ENCODE measurements at regions of chr3 and their contacts with region 1.

Region 1: GRCh38 chr3:151305101-151305750 is 11.4 kb downstream of the GPR87 start:
- DNase-seq: no peak
- ATAC-seq: peak; percentile 48
- H3K4me3 Mint-ChIP-seq: no peak overlapping the region
- H3K27ac Mint-ChIP-seq: peak overlapping the region; percentile 10
- H3K4me1 Mint-ChIP-seq: peaks cover 73% of the 10 kb centered on the region
- H3K27me3 Mint-ChIP-seq: no peaks in the 10 kb centered on the region

Region 2: GRCh38 chr3:151290673-151291072 is 14.6 kb before region 1 on chr3:
- CTCF ChIA-PET with region 1: interaction called, 14 read pairs
- DNase-seq: no peak
- ATAC-seq: no peak
- H3K4me3 Mint-ChIP-seq: no peak overlapping the region
- H3K27ac Mint-ChIP-seq: no peak overlapping the region
- H3K4me1 Mint-ChIP-seq: peaks cover 13% of the 10 kb centered on the region
- H3K27me3 Mint-ChIP-seq: peaks cover 2% of the 10 kb centered on the region

Region 3: DNA sequence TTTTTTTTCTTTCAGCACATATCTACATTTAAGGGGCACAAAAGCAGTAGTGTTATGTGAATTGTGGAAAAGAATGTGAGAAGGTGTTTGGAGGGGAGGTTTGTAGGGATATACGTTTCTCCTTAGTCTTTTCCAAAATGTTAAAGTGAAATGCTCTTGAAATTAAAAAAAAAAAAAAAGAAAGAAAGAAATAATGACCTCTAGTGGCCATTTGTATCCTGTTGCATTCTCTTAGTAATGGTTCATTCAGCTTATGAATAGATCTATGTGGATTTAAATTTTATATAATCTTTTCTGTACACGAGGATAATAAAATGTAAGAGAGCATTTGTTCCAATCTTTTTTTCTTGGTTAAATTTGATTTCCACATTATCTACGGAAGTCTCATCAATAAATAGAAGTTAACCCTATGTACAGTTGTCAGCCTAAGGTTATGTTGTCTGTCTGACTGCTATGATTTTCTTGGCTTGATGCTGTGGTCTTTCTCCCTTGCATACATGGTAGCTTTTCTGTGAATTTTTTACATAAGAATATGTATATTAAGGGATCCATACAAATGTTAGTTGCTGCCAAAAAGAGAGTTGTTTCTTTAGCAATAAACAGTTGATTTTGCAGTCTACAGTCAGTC is 22.5 kb after region 1 on chr3:
- CTCF ChIA-PET with region 1: interaction called, 12 read pairs
- DNase-seq: no peak
- ATAC-seq: no peak
- H3K4me3 Mint-ChIP-seq: no peak overlapping the region
- H3K27ac Mint-ChIP-seq: no peak overlapping the region
- H3K4me1 Mint-ChIP-seq: peaks cover 12% of the 10 kb centered on the region
- H3K27me3 Mint-ChIP-seq: peaks cover 2% of the 10 kb centered on the region

Region 4: DNA sequence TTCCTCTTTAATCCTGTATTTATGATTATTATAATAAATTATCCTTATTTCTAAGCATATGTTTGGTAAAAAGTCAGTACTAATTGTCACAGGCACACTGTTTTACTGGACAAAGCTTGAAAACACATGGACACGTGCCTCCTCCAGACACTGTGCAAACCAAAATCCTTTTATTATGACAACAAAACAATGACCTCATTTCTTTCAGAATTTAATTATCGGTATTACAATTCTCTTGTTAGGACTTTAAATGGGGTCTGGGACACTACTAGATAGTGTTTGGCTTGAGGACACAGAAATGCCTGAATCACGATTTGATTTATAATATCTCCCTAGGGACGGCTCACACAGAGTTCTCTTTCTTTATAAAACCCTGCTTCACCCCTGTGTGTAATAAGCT is 263.0 kb after region 1 on chr3:
- CTCF ChIA-PET with region 1: no interaction called
- DNase-seq: no peak
- ATAC-seq: no peak
- H3K4me3 Mint-ChIP-seq: no peak overlapping the region
- H3K27ac Mint-ChIP-seq: no peak overlapping the region
- H3K4me1 Mint-ChIP-seq: no peaks in the 10 kb centered on the region
- H3K27me3 Mint-ChIP-seq: no peaks in the 10 kb centered on the region